Heart left ventricle (tissue), 16 donors: ENCODE measurements at regions of chr12 and their contacts with region 1.

Region 1: GRCh38 chr12:3777206-3777809 is 24.4 kb upstream of the CRACR2A start:
- DNase-seq: no peak
- ATAC-seq: peak; percentile 48 to 65 (median 62)
- H3K4me3 ChIP-seq: no peak overlapping the region
- H3K27ac ChIP-seq: no peak overlapping the region
- H3K4me1 ChIP-seq: peaks cover 0 to 14% (median 1%) of the 10 kb centered on the region in 12 donors
- H3K27me3 ChIP-seq: no peaks in the 10 kb centered on the region
- CTCF ChIP-seq: peak; percentile 48 to 79 (median 70)
- POLR2A ChIP-seq: no peak

Region 2: DNA sequence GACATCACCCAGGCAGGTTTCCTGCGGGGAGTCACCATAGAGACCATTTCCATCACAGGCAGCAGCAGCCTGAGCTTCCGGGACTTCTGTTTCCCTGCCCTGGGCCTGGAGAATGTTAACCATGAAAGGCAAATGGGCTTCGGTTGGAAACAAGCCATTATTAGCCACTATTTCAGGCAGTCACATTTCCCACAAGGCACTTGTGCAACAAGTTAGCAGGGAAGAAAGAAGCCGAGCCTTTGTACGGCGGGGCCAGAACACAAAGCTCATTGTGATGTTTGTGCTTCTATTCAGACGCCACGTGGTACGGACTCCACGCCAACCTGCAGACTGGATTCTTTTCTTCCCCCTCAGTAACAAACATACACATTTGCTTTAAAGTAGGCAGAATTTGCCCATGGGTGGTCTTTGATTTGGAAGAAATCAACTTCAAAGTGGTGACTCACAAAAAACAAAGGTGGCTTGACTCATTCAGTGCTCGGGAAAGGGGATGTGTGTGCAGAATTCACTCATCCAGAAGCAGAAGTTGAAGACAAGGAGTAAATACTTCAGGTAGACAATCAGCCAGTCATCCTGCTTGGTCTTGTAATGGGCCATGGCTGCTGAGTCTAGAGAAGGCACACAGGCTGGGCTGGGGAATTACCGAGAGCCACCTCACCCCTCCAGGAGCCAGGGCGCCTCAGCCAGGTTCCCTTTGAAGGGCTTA is 440.5 kb before region 1 on chr12:
- intact Hi-C with region 1: loop called in 3 of 10 experiments (anchors 5 to 10 kb)
- DNase-seq: peak in 4 of 5 donors; percentile 56 to 78 (median 74)
- ATAC-seq: peak; percentile 66 to 86 (median 74)
- H3K4me3 ChIP-seq: no peak overlapping the region
- H3K27ac ChIP-seq: peak overlapping the region in 11 of 12 donors; percentile 19 to 74 (median 65)
- H3K4me1 ChIP-seq: peaks cover 3 to 44% (median 18%) of the 10 kb centered on the region in 12 donors
- H3K27me3 ChIP-seq: no peaks in the 10 kb centered on the region
- CTCF ChIP-seq: no peak
- POLR2A ChIP-seq: no peak

Region 3: GRCh38 chr12:3342056-3342455 is 435.3 kb before region 1 on chr12:
- intact Hi-C with region 1: loop called in 4 of 10 experiments (anchors 2 to 10 kb)
- DNase-seq: peak in 4 of 5 donors; percentile 65 to 76 (median 70)
- ATAC-seq: peak; percentile 79 to 91 (median 80)
- H3K4me3 ChIP-seq: no peak overlapping the region
- H3K27ac ChIP-seq: peak overlapping the region in 7 of 12 donors; percentile 12 to 63 (median 55)
- H3K4me1 ChIP-seq: peaks cover 0 to 24% (median 6%) of the 10 kb centered on the region in 12 donors
- H3K27me3 ChIP-seq: no peaks in the 10 kb centered on the region
- CTCF ChIP-seq: peak; percentile 35 to 78 (median 62)
- POLR2A ChIP-seq: no peak

Region 4: DNA sequence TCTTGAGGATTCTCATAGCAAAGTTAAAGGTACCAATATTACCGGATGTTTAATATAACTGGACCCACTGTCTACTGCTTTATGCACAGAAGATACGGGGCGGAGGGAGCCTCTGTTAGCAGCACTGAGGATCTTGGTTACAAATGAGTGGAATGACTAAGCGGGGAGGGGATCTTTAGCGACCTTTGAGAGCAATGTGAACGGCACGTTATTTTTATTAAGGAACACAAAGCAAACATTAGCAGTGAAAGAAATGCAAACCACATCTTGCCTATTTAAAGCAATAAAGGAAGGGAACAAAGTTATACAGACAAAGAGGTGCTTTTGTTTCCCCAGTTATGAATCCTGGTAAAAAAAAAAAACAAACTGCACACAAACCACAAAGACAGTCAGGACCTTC is 313.4 kb before region 1 on chr12:
- intact Hi-C with region 1: loop called in 1 of 10 experiments (anchors 10 kb)
- DNase-seq: no peak
- ATAC-seq: no peak
- H3K4me3 ChIP-seq: no peak overlapping the region
- H3K27ac ChIP-seq: no peak overlapping the region
- H3K4me1 ChIP-seq: no peaks in the 10 kb centered on the region
- H3K27me3 ChIP-seq: peaks cover 0 to 14% (median 0%) of the 10 kb centered on the region in 9 donors
- CTCF ChIP-seq: no peak
- POLR2A ChIP-seq: no peak

Region 5: GRCh38 chr12:3491938-3492792 is 285.1 kb before region 1 on chr12:
- intact Hi-C with region 1: loop called in 1 of 10 experiments (anchors 10 kb)
- DNase-seq: peak in 4 of 5 donors; percentile 41 to 65 (median 52)
- ATAC-seq: peak; percentile 62 to 89 (median 84)
- H3K4me3 ChIP-seq: peak overlapping the region; percentile 22 to 51 (median 44)
- H3K27ac ChIP-seq: no peak overlapping the region
- H3K4me1 ChIP-seq: peaks cover 0 to 35% (median 7%) of the 10 kb centered on the region in 12 donors
- H3K27me3 ChIP-seq: peaks cover 22 to 77% (median 57%) of the 10 kb centered on the region in 9 donors
- CTCF ChIP-seq: peak in 1 of 12 donors; percentile 6
- POLR2A ChIP-seq: no peak

Region 6: GRCh38 chr12:3658327-3659163 is 118.8 kb before region 1 on chr12:
- intact Hi-C with region 1: loop called in 7 of 10 experiments (anchors 2 to 10 kb)
- DNase-seq: peak in 3 of 5 donors; percentile 28 to 44 (median 41)
- ATAC-seq: peak; percentile 47 to 77 (median 56)
- H3K4me3 ChIP-seq: no peak overlapping the region
- H3K27ac ChIP-seq: no peak overlapping the region
- H3K4me1 ChIP-seq: peaks cover 0 to 19% (median 5%) of the 10 kb centered on the region in 12 donors
- H3K27me3 ChIP-seq: no peaks in the 10 kb centered on the region
- CTCF ChIP-seq: peak; percentile 26 to 62 (median 46)
- POLR2A ChIP-seq: no peak

Region 7: GRCh38 chr12:3680896-3681594 is 96.3 kb before region 1 on chr12:
- intact Hi-C with region 1: loop called in 4 of 10 experiments (anchors 5 to 10 kb)
- DNase-seq: peak; percentile 49 to 83 (median 68)
- ATAC-seq: peak in 3 of 4 donors; percentile 28 to 37 (median 35)
- H3K4me3 ChIP-seq: no peak overlapping the region
- H3K27ac ChIP-seq: peak overlapping the region in 3 of 12 donors; percentile 7 to 65 (median 28)
- H3K4me1 ChIP-seq: peaks cover 0 to 34% (median 7%) of the 10 kb centered on the region in 12 donors
- H3K27me3 ChIP-seq: no peaks in the 10 kb centered on the region
- CTCF ChIP-seq: peak in 9 of 12 donors; percentile 19 to 55 (median 30)
- POLR2A ChIP-seq: no peak

Region 8: DNA sequence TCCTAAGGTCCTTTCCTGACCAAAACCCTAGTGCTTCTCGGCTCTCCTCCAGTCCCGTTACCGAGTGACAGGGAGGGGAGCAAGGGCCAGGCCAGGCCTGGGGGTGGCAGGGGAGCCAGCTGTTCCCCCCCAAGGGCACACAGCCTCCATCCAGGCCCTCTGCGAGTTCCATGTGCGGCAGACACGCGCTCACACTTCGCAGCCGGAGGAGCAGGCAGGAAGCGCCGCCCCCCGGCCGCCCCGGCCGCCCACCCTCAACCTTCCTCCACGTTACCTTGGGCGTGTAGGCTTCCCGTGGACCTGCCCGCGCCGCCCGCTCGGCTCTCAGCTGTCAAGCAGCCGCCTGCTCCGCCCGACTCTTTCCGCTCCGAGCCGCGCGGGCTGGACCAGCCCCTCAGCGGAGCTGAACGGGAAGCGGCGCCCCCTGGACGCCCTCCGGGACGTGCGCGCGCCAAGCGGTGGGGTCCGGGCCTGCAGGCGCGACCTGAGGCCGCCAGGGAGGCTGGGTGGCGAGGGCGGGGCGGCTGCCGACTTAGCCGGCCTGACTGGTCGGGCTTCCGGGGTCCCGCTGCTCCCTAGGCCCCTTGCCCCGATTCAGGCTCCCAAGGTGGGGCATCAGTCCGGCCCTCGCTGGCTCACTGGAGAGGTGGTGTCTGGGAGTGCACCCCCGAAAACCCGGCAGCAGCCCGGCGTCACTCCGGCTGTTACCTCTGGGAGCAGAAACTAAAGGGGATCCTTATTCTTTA is 24.4 kb before region 1 on chr12 and contains the start of gene CRACR2A:
- intact Hi-C with region 1: no loop called
- DNase-seq: peak; percentile 65 to 91 (median 78)
- ATAC-seq: peak; percentile 26 to 87 (median 78)
- H3K4me3 ChIP-seq: peak within 1 kb of the TSS; percentile 26 to 79 (median 58)
- H3K27ac ChIP-seq: peak within 1 kb of the TSS; percentile 33 to 94 (median 74)
- H3K4me1 ChIP-seq: peaks cover 0 to 43% (median 16%) of the 10 kb centered on the region in 12 donors
- H3K27me3 ChIP-seq: no peaks in the 10 kb centered on the region
- CTCF ChIP-seq: peak; percentile 32 to 73 (median 62)
- POLR2A ChIP-seq: no peak
- total RNA-seq, gene CRACR2A: 2.9 to 14.1 (median 6.4) TPM